Posterior vena cava (tissue), 2 donors: ENCODE measurements at regions of chr6 and their contacts with region 1.

Region 1: DNA sequence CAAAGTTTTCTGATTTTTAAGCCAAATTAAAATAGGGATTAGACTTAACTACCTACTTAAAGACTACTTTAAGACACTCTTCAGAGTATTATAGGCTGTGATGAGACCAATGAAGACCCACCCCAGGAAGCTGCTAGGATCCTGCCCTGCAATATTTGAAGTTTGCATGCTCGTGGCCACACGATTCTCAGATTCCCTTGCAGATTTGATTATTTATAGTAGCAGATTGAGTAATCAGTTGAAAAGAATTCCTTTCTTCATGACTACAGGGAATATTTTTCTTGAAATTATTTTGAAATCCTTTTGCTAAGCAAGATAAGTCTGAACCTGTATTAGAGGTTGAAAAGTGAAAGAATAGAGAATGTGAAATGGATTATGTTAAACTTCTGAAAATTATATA is 122.3 kb downstream of the B3GAT2 start:
- DNase-seq: no peak

Region 2: GRCh38 chr6:70806086-70806485 is 28.4 kb before region 1 on chr6:
- intact Hi-C with region 1: loop called in 1 of 2 experiments (anchors 2 kb)
- DNase-seq: no peak

Region 3: GRCh38 chr6:71082033-71082641 is 247.6 kb after region 1 on chr6:
- intact Hi-C with region 1: no loop called
- DNase-seq: no peak

Region 4: GRCh38 chr6:71575875-71576274 is 741.4 kb after region 1 on chr6:
- intact Hi-C with region 1: no loop called
- DNase-seq: no peak